ENCODE measurements at regions of chr6 and their contacts with region 1.

Region 1: GRCh38 chr6:134979142-134979541 is 29.2 kb upstream of the ALDH8A1 start:
- DNase-seq: peak; percentile 78
- H3K4me3 Mint-ChIP-seq: no peak overlapping the region
- H3K27ac Mint-ChIP-seq: peak overlapping the region; percentile 72
- H3K4me1 Mint-ChIP-seq: peaks cover 45% of the 10 kb centered on the region
- H3K27me3 Mint-ChIP-seq: no peaks in the 10 kb centered on the region

Region 2: DNA sequence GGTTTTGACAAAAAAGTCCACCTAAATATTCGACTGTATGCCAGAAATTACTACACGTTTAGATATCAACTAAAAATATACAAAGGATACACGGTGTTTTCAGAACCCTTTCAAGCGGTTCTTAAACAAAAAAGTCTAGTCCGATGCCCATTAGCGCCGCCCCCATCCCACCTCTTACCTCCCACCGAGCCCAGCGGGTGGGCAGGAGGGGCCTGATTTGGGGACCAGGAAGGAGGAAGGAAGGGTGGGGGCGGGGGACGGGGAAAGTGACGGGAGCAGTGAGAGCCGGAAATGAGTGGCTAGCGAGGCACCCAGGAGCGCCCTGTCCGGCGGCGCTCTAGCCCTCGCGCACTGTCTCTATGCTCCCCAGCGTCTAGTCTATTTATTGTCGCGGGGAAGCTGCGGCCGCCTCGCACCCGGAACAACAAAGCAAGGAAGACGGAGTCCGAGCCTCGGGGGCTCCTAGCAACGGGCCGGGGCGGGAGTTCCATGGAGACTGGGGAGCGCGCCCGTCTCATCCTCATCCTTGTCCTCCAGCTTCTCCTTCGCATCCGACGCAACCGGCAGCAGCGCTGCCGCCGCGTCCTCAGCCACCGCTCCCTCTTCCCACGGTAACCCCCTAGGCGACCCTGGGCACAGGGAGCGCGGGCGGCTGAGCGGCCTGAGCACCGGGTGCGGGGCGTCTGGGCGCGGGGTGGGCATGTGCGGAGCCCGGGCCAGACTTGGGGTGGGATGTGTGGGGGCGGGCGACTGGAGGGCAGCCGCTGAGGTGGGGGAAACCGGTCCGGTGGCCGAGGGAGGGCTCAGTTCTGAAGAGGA is 1026.1 kb before region 1 on chr6 and contains the start of gene TBPL1:
- CTCF ChIA-PET with region 1: no interaction called
- POLR2A ChIA-PET with region 1: no interaction called
- intact Hi-C with region 1: loop called (anchors 5 kb)
- DNase-seq: peak; percentile 93
- H3K4me3 Mint-ChIP-seq: peak within 1 kb of the TSS; percentile 93
- H3K27ac Mint-ChIP-seq: peak within 1 kb of the TSS; percentile 89
- H3K4me1 Mint-ChIP-seq: peaks cover 37% of the 10 kb centered on the region
- H3K27me3 Mint-ChIP-seq: no peaks in the 10 kb centered on the region
- total RNA-seq, gene TBPL1: 31.3 to 35.7 TPM

Region 3: GRCh38 chr6:135014353-135014832 is 35.3 kb after region 1 on chr6:
- CTCF ChIA-PET with region 1: no interaction called
- POLR2A ChIA-PET with region 1: no interaction called
- intact Hi-C with region 1: loop called (anchors 1 kb)
- DNase-seq: peak; percentile 17
- H3K4me3 Mint-ChIP-seq: peak overlapping the region; percentile 32
- H3K27ac Mint-ChIP-seq: peak overlapping the region; percentile 70
- H3K4me1 Mint-ChIP-seq: peaks cover 48% of the 10 kb centered on the region
- H3K27me3 Mint-ChIP-seq: no peaks in the 10 kb centered on the region

Region 4: GRCh38 chr6:135088818-135089809 is 110.0 kb after region 1 on chr6:
- CTCF ChIA-PET with region 1: no interaction called
- POLR2A ChIA-PET with region 1: no interaction called
- intact Hi-C with region 1: loop called (anchors 1 kb)
- DNase-seq: peak; percentile 56
- H3K4me3 Mint-ChIP-seq: peak overlapping the region; percentile 34
- H3K27ac Mint-ChIP-seq: peak overlapping the region; percentile 75
- H3K4me1 Mint-ChIP-seq: peaks cover 83% of the 10 kb centered on the region
- H3K27me3 Mint-ChIP-seq: no peaks in the 10 kb centered on the region

Region 5: DNA sequence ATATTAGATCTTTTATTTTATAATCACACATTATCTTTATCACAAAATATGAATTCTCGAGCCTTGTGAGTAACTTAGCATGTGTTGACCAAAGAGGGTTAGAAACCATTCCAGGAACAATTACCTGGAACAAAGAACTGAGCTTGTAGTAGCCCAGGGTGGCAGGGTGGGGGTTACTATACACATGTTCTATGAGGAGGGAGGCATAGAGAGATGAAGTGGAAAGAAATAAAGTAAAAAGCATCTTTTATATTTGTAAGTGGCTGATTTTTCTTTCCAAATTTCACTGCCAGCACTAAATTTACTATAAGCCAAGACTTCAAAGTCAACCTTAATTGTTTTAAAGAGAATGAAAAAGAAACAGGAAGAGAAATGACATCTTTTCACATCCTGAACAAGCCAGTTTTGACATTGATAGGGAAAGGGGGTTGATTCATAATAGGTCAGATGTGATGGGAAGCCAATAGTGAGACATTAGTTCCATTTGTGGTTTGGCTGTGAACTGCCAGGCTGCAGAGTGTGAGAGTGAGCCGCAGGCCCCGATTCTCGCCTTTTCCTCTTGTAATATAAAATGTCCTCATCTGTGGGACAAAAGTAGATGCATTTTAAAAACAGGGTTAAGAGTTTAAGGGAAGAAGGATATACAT is 149.2 kb after region 1 on chr6:
- CTCF ChIA-PET with region 1: no interaction called
- POLR2A ChIA-PET with region 1: no interaction called
- intact Hi-C with region 1: loop called (anchors 1 kb)
- DNase-seq: peak; percentile 82
- H3K4me3 Mint-ChIP-seq: peak overlapping the region; percentile 24
- H3K27ac Mint-ChIP-seq: peak overlapping the region; percentile 81
- H3K4me1 Mint-ChIP-seq: peaks cover 42% of the 10 kb centered on the region
- H3K27me3 Mint-ChIP-seq: no peaks in the 10 kb centered on the region

Region 6: DNA sequence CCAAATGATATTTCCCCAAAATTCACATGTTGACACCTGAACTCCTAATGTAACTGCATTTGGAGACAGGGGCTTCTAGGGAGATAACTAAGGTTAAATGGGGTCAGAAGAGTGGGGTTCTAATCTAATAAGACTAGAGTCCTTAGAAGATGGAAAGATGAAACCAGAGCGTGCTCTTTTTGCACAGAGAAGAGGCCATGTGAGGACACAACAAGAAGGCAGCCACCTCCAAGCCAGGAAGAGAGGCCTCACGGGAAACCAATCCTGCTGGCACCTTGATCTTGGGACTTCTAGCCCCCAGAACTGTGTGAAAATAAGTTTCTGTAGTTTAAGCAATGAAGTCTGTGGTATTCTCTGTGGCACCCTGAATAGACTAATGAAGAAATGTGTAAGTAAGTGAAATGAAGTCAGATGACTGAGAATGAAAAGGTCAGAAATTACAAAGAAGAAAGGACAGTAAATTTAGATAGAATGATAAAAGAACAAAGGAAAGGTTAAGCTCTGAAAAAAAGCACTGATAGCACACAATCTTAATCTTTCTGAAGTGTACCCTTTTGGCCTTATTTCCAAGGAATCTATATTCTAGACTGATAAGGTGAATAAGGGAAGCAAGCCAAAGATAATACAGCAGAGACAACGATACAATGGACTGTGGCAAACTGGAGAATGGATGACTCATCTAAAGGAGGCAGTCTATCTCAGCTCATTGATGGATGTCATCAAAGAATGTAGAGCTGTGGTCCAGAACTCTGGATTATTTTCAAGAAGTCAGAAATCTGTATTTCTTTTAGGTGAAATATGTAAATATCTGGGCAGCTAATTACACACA is 312.4 kb after region 1 on chr6:
- CTCF ChIA-PET with region 1: no interaction called
- POLR2A ChIA-PET with region 1: no interaction called
- intact Hi-C with region 1: loop called (anchors 10 kb)
- DNase-seq: no peak
- H3K4me3 Mint-ChIP-seq: no peak overlapping the region
- H3K27ac Mint-ChIP-seq: no peak overlapping the region
- H3K4me1 Mint-ChIP-seq: peaks cover 8% of the 10 kb centered on the region
- H3K27me3 Mint-ChIP-seq: no peaks in the 10 kb centered on the region

Measured in activated CD4-positive, alpha-beta memory T cell treated with anti-CD3 and anti-CD28 coated beads for 36 hours (primary cell).